B cell (primary cell): ENCODE measurements at regions of chr6 and their contacts with region 1.

Region 1: DNA sequence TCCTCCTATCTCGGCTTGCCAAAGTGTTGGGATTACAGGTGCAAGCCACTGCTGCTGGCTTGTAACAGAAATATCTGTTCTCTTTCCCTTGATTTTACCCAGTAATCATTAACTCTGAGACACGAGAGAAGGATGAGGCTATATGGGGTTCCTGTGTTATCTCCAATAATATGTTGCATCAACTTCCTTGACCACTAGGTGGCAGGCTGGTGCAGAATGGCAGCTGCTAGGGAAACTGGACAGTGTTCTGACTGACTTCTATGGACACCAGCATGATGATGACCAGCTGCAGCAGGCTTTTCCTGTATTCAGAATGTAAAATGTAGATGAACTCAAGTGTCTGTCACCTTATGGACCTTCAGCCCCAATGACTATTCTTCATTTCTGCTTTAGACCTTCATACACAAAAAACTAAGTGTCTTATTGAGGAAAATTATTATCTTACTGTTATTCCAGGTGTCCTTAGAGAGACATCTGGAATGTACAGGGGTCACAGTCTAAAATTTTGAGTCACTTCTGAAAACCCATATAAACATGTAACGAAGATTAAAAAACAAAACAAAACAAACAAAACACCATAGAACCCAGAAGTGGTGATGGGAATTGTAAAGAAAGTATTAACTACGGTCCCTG is 20.4 kb upstream of the CD109 start:
- DNase-seq: peak; percentile 68
- ATAC-seq: peak; percentile 75
- H3K4me3 ChIP-seq: no peak overlapping the region
- H3K4me3 Mint-ChIP-seq: no peak overlapping the region
- H3K27ac ChIP-seq: no peak overlapping the region
- H3K27ac Mint-ChIP-seq: no peak overlapping the region
- H3K4me1 ChIP-seq: no peaks in the 10 kb centered on the region
- H3K4me1 Mint-ChIP-seq: no peaks in the 10 kb centered on the region
- H3K27me3 ChIP-seq: peaks cover 0 to 3% (median 0%) of the 10 kb centered on the region in 4 experiments
- H3K27me3 Mint-ChIP-seq: peaks cover 17% of the 10 kb centered on the region
- CTCF ChIP-seq: peak; percentile 96

Region 2: GRCh38 chr6:73688351-73688750 is 12.8 kb after region 1 on chr6:
- CTCF ChIA-PET with region 1: interaction called, 24 read pairs
- POLR2A ChIA-PET with region 1: no interaction called
- intact Hi-C with region 1: no loop called
- DNase-seq: no peak
- ATAC-seq: no peak
- H3K4me3 ChIP-seq: no peak overlapping the region
- H3K4me3 Mint-ChIP-seq: no peak overlapping the region
- H3K27ac ChIP-seq: no peak overlapping the region
- H3K27ac Mint-ChIP-seq: no peak overlapping the region
- H3K4me1 ChIP-seq: no peaks in the 10 kb centered on the region
- H3K4me1 Mint-ChIP-seq: no peaks in the 10 kb centered on the region
- H3K27me3 ChIP-seq: peaks cover 0 to 12% (median 7%) of the 10 kb centered on the region in 4 experiments
- H3K27me3 Mint-ChIP-seq: peaks cover 33% of the 10 kb centered on the region
- CTCF ChIP-seq: no peak

Region 3: GRCh38 chr6:73732845-73733675 is 57.5 kb after region 1 on chr6:
- CTCF ChIA-PET with region 1: interaction called, 25 read pairs
- POLR2A ChIA-PET with region 1: no interaction called
- intact Hi-C with region 1: loop called (anchors 1 kb)
- DNase-seq: peak; percentile 65
- ATAC-seq: peak; percentile 89
- H3K4me3 ChIP-seq: no peak overlapping the region
- H3K4me3 Mint-ChIP-seq: no peak overlapping the region
- H3K27ac ChIP-seq: no peak overlapping the region
- H3K27ac Mint-ChIP-seq: no peak overlapping the region
- H3K4me1 ChIP-seq: no peaks in the 10 kb centered on the region
- H3K4me1 Mint-ChIP-seq: no peaks in the 10 kb centered on the region
- H3K27me3 ChIP-seq: no peaks in the 10 kb centered on the region
- H3K27me3 Mint-ChIP-seq: no peaks in the 10 kb centered on the region
- CTCF ChIP-seq: peak; percentile 84